Activated CD8-positive, alpha-beta memory T cell treated with anti-CD3 and anti-CD28 coated beads, Interleukin-2, amount 10 ng/mL, durations not matched to agents 7 days and 5 days (primary cell): ENCODE measurements at regions of chr20 and their contacts with region 1.

Region 1: DNA sequence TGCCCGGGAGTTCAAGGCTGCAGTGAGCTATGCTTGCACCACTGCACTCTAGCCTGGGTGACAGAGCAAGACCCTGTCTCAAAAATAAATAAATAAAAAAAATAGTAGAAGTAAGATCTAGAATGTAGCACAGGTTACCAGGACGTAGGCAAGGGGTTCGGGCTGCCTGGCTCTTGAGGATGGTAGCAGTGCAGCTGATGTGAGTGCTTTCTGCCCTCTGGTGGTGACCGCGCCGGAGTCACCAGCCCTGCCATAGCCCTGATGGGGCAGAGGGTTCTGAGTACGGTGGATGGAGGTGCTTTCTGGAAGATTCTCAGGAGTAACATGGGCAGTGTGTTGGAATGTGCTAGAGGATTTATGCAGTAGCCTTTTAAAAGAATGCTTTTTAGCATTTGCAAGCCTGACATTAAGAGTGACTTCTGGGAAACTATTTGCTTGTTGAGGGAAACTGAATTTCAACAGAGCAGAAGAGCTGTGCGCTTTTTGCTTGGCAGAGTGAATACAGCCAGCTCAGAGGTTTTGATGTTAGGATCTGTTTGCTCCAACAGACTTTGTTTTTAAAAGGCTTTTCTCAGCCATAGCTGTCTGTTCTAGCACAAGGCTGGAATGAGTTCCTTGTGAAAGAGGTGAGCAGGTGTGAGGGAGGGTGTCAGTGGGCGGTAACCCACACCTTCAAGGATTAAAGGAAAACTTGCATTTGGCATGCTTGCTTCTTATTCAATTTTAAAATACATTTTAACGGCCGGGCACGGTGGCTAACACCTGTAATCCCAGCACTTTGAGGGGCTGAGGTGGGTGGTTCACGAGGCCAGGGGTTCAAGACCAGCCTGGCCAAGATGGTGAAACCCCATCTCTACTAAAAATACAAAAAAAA is 65.9 kb downstream of the PTPN1 start:
- DNase-seq: peak; percentile 75
- ATAC-seq: peak; percentile 92
- H3K4me3 Mint-ChIP-seq: no peak overlapping the region
- H3K27ac Mint-ChIP-seq: peak overlapping the region; percentile 20
- H3K4me1 Mint-ChIP-seq: peaks cover 14% of the 10 kb centered on the region
- H3K27me3 Mint-ChIP-seq: no peaks in the 10 kb centered on the region

Region 2: GRCh38 chr20:50478162-50479036 is 97.7 kb before region 1 on chr20:
- CTCF ChIA-PET with region 1: interaction called, 25 read pairs
- DNase-seq: peak; percentile 88
- ATAC-seq: peak; percentile 100
- H3K4me3 Mint-ChIP-seq: no peak overlapping the region
- H3K27ac Mint-ChIP-seq: peak overlapping the region; percentile 49
- H3K4me1 Mint-ChIP-seq: peaks cover 54% of the 10 kb centered on the region
- H3K27me3 Mint-ChIP-seq: no peaks in the 10 kb centered on the region

Region 3: GRCh38 chr20:50504231-50504823 is 71.8 kb before region 1 on chr20:
- CTCF ChIA-PET with region 1: interaction called, 40 read pairs
- DNase-seq: no peak
- ATAC-seq: no peak
- H3K4me3 Mint-ChIP-seq: no peak overlapping the region
- H3K27ac Mint-ChIP-seq: no peak overlapping the region
- H3K4me1 Mint-ChIP-seq: peaks cover 16% of the 10 kb centered on the region
- H3K27me3 Mint-ChIP-seq: no peaks in the 10 kb centered on the region

Region 4: DNA sequence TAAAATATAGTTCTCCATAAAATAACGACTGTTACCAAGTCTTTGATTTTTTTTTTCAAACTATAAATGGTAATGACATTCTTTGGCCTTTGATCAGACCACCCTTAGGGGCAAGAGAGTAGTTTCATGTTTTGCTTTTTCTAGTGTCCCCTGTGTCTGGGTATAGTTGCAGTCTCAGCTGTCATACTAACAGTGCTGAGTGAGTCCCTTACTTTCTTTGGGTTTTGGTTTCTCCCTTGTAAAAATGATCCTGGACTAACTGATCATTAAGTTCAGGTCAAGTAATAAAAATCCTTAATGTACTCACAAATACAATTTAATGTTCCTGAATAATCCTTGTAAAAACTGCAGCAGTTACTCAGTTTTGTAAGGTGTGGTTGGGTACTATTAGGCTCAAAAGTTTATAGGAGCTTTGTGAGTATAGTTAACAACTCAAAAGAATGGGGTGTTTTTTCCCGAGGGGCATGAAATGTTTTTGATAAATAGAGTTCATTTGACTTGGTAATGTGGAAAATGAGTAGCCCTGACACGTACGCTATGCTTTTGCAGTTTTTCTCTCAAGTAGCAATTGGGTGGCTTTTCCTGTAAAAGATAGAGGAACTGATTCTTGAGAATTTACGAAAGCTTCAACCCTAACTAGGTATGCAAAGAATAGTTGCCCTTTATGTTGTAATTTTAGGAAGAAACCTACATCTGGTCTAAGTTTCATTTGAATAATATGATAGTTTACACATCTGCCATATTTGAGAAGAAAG is 59.7 kb before region 1 on chr20:
- CTCF ChIA-PET with region 1: interaction called, 40 read pairs
- DNase-seq: no peak
- ATAC-seq: no peak
- H3K4me3 Mint-ChIP-seq: peak overlapping the region; percentile 76
- H3K27ac Mint-ChIP-seq: peak overlapping the region; percentile 95
- H3K4me1 Mint-ChIP-seq: peaks cover 88% of the 10 kb centered on the region
- H3K27me3 Mint-ChIP-seq: no peaks in the 10 kb centered on the region

Region 5: DNA sequence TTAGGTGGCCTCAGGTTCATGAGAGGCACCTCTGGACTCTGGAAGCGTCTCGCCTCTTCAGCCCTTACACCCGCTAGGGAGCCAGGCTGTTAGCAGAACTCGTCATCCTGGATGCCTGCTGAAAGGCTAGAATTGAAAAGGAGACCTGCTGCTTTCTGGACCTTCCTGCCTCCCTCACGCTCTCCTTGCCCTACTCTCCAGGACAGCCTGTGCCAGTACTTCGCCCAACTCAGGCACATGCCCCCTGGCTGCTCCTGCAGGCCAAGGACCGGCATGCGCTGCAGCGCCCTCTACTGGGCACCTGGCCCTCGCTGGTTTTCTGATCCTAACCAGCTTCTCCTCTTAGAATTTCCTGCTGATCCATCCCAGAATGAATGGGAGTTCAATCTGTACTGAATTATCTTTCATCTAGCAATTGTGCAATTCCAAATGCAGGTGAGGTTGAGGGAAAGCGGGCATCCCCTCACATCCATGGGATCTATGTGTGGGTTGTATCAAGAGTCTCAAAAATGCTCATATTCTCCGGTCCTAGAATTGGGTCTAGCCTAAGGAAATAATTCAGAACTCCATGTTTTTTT is 12.0 kb after region 1 on chr20:
- CTCF ChIA-PET with region 1: interaction called, 10 read pairs
- DNase-seq: peak; percentile 79
- ATAC-seq: peak; percentile 72
- H3K4me3 Mint-ChIP-seq: no peak overlapping the region
- H3K27ac Mint-ChIP-seq: no peak overlapping the region
- H3K4me1 Mint-ChIP-seq: peaks cover 4% of the 10 kb centered on the region
- H3K27me3 Mint-ChIP-seq: no peaks in the 10 kb centered on the region

Region 6: DNA sequence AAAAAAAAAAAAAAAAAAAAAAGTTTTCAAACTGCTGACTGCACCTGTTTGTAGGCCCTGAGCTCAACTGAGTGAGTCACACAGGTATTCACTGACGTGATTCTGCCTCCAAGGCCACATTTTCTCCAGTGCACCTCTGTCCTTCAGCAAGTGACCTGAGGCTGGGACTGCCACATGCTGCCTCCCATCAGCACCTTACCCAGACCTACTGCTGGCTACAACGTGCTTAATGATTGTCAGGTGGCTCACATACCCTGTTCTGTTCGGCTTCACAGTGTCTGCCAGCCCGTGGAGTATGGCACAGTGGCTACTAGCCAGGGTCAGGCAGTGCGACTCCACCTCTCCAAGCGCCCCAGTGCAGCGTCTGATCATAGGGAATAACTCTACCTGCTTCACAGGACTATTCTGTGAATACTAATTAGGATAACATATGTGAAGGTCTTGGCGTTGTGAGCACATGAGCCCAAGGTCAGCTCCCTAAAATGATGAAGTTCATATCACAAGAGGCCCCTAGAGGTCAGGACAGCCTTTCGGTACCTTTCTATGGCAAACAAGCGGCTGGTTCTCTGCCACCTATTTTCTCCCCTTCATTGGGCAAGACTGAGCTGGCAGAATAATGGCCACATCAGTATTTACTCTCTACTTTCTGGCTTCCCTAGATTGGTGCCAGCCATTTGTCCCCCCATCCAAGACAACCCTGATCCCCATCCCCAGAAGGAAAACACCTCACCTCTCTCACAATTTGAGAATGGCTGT is 87.2 kb after region 1 on chr20:
- CTCF ChIA-PET with region 1: no interaction called
- DNase-seq: no peak
- ATAC-seq: no peak
- H3K4me3 Mint-ChIP-seq: no peak overlapping the region
- H3K27ac Mint-ChIP-seq: no peak overlapping the region
- H3K4me1 Mint-ChIP-seq: no peaks in the 10 kb centered on the region
- H3K27me3 Mint-ChIP-seq: peaks cover 8% of the 10 kb centered on the region

Region 7: DNA sequence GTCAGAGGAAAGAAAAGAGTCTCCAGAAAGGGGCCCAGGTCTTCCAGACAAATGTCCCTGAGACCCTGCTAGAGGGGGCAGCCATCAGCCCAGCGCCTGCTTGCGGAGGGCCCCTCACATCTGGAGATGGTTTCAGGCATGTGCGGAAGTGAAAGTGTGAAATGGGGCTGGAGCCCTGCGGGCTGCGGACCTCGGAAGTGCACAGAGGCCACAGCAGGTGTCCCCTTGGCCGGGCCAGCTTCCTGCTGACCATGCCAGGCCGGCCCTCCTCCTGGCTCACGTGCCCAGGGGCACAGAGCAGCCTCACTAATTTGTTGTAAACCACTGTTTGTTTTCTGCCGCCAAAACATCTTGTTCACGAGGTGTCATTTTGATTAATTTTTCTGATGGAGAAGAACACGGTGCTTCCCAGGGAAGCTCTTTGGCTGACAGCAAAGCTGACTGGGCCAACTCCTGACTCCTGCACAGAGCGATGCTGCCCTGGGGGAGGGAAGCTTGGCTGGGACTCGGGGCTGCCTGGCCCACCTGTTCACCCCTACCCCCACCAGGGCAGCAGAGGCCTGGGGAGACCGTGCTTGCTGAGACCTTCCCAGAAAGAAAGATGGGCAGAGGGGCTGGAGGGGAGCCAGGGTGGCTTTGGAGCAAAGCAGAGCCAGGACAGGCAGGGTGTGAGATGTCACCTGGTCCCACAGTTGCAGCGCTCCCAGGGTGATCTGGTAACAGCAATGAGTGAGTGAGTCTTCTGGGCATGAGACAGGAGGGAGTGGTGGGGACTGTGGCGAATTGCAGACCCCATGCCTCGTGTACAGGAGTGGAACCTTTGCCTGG is 273.0 kb after region 1 on chr20:
- CTCF ChIA-PET with region 1: no interaction called
- DNase-seq: no peak
- ATAC-seq: no peak
- H3K4me3 Mint-ChIP-seq: no peak overlapping the region
- H3K27ac Mint-ChIP-seq: peak overlapping the region; percentile 66
- H3K4me1 Mint-ChIP-seq: peaks cover 71% of the 10 kb centered on the region
- H3K27me3 Mint-ChIP-seq: no peaks in the 10 kb centered on the region